Activated CD4-positive, alpha-beta T cell treated with anti-CD3 and anti-CD28 coated beads, Interleukin-2, amount 10 ng/mL, durations not matched to agents 24 days and 14 days (primary cell): ENCODE measurements at regions of chr12 and their contacts with region 1.

Region 1: GRCh38 chr12:21456291-21456780 is 18.9 kb downstream of the PYROXD1 start:
- DNase-seq: peak; percentile 88
- H3K4me3 Mint-ChIP-seq: peak overlapping the region; percentile 59
- H3K27ac Mint-ChIP-seq: peak overlapping the region; percentile 97
- H3K4me1 Mint-ChIP-seq: peaks cover 50% of the 10 kb centered on the region
- H3K27me3 Mint-ChIP-seq: no peaks in the 10 kb centered on the region

Region 2: GRCh38 chr12:21392384-21392783 is 64.0 kb before region 1 on chr12:
- intact Hi-C with region 1: no loop called
- DNase-seq: no peak
- H3K4me3 Mint-ChIP-seq: no peak overlapping the region
- H3K27ac Mint-ChIP-seq: no peak overlapping the region
- H3K4me1 Mint-ChIP-seq: peaks cover 4% of the 10 kb centered on the region
- H3K27me3 Mint-ChIP-seq: peaks cover 9% of the 10 kb centered on the region

Region 3: DNA sequence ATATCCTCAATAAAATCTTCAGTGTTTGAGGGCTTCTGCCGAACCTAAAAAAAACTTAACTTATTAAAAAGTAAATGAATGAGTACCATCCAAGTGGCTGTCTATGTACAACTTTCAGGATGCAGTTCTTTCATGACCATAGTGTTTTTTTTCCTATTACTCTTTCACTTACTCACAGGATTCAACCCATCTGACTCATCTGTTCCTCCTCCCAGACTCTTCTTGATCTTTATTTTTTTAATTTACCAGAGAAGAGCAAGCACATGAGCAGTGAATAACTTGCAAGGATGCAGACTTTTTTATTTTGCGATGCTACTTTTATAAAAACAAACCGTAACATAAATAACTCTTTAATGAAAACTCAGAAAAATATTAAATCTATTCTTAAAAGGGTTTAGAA is 20.6 kb after region 1 on chr12:
- intact Hi-C with region 1: loop called (anchors 1 kb)
- DNase-seq: no peak
- H3K4me3 Mint-ChIP-seq: peak overlapping the region; percentile 34
- H3K27ac Mint-ChIP-seq: peak overlapping the region; percentile 81
- H3K4me1 Mint-ChIP-seq: peaks cover 11% of the 10 kb centered on the region
- H3K27me3 Mint-ChIP-seq: no peaks in the 10 kb centered on the region

Region 4: DNA sequence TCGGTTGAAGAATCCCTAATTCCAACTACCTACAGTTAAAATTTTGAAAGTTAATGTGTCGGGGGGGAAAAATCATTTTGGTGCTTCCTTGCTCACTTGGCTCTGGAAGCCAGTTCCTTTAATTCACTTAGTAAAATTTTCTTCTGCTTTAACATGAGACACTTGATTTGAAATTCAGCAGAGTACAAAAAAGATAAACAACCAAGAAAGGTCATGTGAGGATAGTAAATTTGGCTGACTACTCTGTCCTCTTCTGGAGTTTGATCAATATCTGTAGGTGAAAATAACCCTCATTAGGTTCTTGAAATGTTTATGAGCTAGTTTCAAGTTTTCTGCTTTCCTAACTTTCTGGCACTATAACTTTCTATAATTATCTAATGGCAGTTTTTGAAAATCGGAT is 274.8 kb after region 1 on chr12:
- intact Hi-C with region 1: no loop called
- DNase-seq: no peak
- H3K4me3 Mint-ChIP-seq: no peak overlapping the region
- H3K27ac Mint-ChIP-seq: no peak overlapping the region
- H3K4me1 Mint-ChIP-seq: no peaks in the 10 kb centered on the region
- H3K27me3 Mint-ChIP-seq: no peaks in the 10 kb centered on the region